Esophagus squamous epithelium (tissue), 5 donors: ENCODE measurements at regions of chr1 and their contacts with region 1.

Region 1: DNA sequence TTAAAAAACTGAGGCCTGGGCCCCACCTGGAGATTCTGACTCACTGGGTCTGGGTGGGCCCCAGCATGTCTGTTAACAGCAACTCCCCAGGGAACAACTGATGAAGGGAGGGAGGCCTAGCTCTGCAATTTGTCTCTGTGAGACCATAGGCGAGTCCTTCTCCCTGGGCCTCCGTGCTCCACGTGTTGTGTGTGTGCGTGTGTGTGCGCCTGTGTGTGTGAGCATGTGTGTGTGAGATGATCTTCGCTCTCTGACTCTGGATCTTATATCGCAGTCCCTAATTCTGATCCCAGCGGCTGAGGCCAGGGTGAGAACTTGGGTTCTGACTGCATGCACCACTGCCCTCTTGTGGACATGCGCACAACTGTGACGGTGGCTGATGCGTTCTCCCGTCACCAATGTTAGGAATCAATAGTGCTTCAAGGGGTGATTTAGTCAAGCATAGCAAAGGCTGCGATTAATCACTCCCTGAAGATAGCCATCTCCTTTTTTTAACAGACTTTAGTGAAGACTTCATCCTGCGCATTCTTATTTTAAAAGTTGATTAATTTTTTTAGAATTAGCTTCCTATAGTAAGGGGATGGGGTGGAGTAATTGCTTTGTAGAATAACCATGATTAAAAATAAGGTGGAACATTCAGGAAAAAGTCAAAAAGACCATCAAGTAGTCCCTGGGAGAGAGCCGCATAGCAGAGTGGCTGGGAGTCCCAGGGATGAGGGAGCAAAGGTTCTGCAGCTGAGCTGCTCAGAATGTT is 62.4 kb upstream of the USP24 start:
- DNase-seq: no peak
- H3K4me3 ChIP-seq: no peak overlapping the region
- H3K27ac ChIP-seq: no peak overlapping the region
- H3K4me1 ChIP-seq: peaks cover 0 to 24% (median 9%) of the 10 kb centered on the region in 3 donors
- H3K27me3 ChIP-seq: no peaks in the 10 kb centered on the region
- CTCF ChIP-seq: peak; percentile 71 to 93 (median 80)
- POLR2A ChIP-seq: no peak

Region 2: GRCh38 chr1:55140546-55140983 is 137.0 kb before region 1 on chr1:
- intact Hi-C with region 1: loop called (anchors 2 kb)
- DNase-seq: peak; percentile 9
- H3K4me3 ChIP-seq: no peak overlapping the region
- H3K27ac ChIP-seq: no peak overlapping the region
- H3K4me1 ChIP-seq: peaks cover 0 to 6% (median 0%) of the 10 kb centered on the region in 3 donors
- H3K27me3 ChIP-seq: no peaks in the 10 kb centered on the region
- CTCF ChIP-seq: peak; percentile 34 to 76 (median 66)
- POLR2A ChIP-seq: no peak

Region 3: DNA sequence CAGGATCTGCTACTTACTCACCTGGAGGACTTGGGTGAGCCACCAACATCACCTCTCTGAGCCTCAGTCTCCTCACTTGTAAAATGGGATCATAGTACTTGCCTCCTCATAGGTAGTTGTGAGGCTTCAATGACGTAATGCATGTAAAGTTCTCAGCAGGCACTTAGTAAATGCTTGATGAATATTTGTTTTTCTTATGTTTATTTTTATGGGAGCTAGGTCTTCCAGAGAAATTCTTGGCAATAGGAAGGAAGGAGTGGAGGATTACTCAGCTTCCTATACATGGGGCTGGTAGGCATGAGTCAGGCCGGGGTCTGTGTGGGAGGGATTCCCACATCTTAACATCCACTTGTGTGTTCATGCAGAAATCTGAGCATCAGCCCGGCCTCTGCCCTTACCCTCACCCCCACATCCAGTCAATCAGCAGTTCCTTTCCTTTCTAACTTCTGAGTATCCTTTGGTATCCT is 33.0 kb after region 1 on chr1:
- intact Hi-C with region 1: no loop called
- DNase-seq: no peak
- H3K4me3 ChIP-seq: no peak overlapping the region
- H3K27ac ChIP-seq: no peak overlapping the region
- H3K4me1 ChIP-seq: peaks cover 0 to 28% (median 7%) of the 10 kb centered on the region in 3 donors
- H3K27me3 ChIP-seq: peaks cover 0 to 9% (median 0%) of the 10 kb centered on the region in 4 donors
- CTCF ChIP-seq: no peak
- POLR2A ChIP-seq: no peak